ENCODE measurements at regions of chr11 and their contacts with region 1.

Region 1: GRCh38 chr11:61871158-61871597 is 20.2 kb downstream of the FADS3 start:
- DNase-seq: peak; percentile 80
- ATAC-seq: peak; percentile 97
- H3K4me3 Mint-ChIP-seq: peak overlapping the region; percentile 48
- H3K27ac Mint-ChIP-seq: no peak overlapping the region
- H3K4me1 Mint-ChIP-seq: peaks cover 2% of the 10 kb centered on the region
- H3K27me3 Mint-ChIP-seq: no peaks in the 10 kb centered on the region
- CTCF ChIP-seq: peak; percentile 95

Region 2: GRCh38 chr11:61885166-61885778 is 14.1 kb after region 1 on chr11:
- CTCF ChIA-PET with region 1: interaction called, 10 read pairs
- POLR2A ChIA-PET with region 1: no interaction called
- intact Hi-C with region 1: no loop called
- DNase-seq: no peak
- ATAC-seq: no peak
- H3K4me3 Mint-ChIP-seq: no peak overlapping the region
- H3K27ac Mint-ChIP-seq: no peak overlapping the region
- H3K4me1 Mint-ChIP-seq: no peaks in the 10 kb centered on the region
- H3K27me3 Mint-ChIP-seq: no peaks in the 10 kb centered on the region
- CTCF ChIP-seq: no peak

Measured in activated CD8-positive, alpha-beta T cell treated with anti-CD3 and anti-CD28 coated beads for 36 hours (primary cell).